ENCODE measurements at regions of chr19 and their contacts with region 1.

Region 1: GRCh38 chr19:49570138-49570856 is 10.1 kb downstream of the NOSIP start:
- DNase-seq: peak; percentile 62
- ATAC-seq: peak; percentile 78
- H3K4me3 Mint-ChIP-seq: peak overlapping the region; percentile 3; the same call in 1 of the 2 replicates
- H3K27ac Mint-ChIP-seq: peak overlapping the region; percentile 76
- H3K4me1 Mint-ChIP-seq: peaks cover 14% of the 10 kb centered on the region
- H3K27me3 Mint-ChIP-seq: no peaks in the 10 kb centered on the region
- CTCF ChIP-seq: peak; percentile 93

Region 2: DNA sequence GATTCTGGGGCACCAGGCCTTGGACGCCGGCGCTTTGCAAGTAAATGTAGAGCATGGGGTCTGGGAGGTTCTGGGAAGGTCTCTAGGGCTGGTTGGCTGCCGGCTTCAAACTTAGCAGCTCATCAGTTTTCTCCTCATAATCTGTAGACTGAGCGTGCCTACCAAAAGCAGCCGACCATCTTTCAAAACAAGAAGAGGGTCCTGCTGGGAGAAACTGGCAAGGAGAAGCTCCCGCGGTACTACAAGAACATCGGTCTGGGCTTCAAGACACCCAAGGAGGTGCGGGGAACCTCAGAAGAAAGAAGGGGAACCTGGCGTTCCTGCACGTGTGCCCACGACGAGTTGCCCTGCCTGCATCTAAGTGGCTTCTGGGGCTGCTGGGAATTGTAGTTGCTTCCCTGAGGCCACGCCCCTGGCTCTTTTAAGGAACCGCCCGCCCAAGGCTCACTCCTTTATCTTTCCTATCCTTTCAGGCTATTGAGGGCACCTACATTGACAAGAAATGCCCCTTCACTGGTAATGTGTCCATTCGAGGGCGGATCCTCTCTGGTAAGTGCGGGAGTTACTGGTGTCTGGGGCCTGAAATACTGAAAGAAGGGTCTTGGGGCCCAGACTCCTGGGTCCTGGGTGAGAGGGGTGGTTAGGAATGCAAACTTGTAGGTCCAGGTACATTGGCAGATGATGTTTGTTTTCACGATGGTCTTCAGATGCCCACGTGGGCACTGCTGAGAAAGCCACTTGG is 73.1 kb before region 1 on chr19:
- CTCF ChIA-PET with region 1: interaction called, 20 read pairs
- POLR2A ChIA-PET with region 1: no interaction called
- DNase-seq: peak; percentile 52
- ATAC-seq: no peak
- H3K4me3 Mint-ChIP-seq: peak overlapping the region; percentile 97
- H3K27ac Mint-ChIP-seq: peak overlapping the region; percentile 98
- H3K4me1 Mint-ChIP-seq: peaks cover 42% of the 10 kb centered on the region
- H3K27me3 Mint-ChIP-seq: no peaks in the 10 kb centered on the region
- CTCF ChIP-seq: no peak

Region 3: DNA sequence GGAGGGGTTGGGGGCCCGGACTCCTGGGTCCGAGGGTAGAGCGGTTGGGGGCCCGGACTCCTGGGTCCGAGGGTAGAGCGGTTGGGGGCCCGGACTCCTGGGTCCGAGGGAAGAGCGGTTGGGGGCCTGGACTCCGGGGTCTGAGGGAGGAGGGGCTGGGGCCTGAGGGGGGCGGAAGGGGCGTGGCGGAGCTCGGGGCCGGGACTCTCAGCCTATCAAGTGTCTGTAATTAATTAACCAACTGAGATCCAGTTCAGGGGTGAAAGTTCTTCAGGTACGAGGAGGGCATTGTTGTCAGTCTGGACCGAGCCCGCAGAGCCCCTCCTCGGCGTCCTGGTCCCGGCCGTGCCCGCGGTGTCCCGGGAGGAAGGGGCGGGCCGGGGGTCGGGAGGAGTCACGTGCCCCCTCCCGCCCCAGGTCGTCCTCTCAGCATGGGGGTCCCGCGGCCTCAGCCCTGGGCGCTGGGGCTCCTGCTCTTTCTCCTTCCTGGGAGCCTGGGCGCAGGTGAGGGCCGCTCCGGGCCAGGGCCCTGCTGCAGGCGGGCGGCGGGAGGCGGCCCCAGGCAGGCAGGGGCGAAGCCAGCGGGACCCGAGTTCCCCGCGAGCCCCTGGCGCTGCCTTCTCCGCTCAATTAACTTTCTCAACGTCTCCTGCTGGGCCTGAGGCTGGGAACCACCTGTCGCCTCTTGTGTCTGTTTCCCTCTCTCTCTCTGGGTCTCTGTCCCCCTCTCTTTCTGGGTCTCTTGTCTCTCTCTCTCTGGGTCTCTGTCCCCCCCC is 57.1 kb before region 1 on chr19:
- CTCF ChIA-PET with region 1: interaction called, 19 read pairs
- POLR2A ChIA-PET with region 1: interaction called, 3 read pairs
- DNase-seq: peak; percentile 65
- ATAC-seq: peak; percentile 74
- H3K4me3 Mint-ChIP-seq: peak overlapping the region; percentile 79
- H3K27ac Mint-ChIP-seq: 0 out of 2 replicates have a peak overlapping the region, but pooled peaks have one; percentile 74
- H3K4me1 Mint-ChIP-seq: peaks cover 28% of the 10 kb centered on the region
- H3K27me3 Mint-ChIP-seq: no peaks in the 10 kb centered on the region
- CTCF ChIP-seq: no peak

Region 4: DNA sequence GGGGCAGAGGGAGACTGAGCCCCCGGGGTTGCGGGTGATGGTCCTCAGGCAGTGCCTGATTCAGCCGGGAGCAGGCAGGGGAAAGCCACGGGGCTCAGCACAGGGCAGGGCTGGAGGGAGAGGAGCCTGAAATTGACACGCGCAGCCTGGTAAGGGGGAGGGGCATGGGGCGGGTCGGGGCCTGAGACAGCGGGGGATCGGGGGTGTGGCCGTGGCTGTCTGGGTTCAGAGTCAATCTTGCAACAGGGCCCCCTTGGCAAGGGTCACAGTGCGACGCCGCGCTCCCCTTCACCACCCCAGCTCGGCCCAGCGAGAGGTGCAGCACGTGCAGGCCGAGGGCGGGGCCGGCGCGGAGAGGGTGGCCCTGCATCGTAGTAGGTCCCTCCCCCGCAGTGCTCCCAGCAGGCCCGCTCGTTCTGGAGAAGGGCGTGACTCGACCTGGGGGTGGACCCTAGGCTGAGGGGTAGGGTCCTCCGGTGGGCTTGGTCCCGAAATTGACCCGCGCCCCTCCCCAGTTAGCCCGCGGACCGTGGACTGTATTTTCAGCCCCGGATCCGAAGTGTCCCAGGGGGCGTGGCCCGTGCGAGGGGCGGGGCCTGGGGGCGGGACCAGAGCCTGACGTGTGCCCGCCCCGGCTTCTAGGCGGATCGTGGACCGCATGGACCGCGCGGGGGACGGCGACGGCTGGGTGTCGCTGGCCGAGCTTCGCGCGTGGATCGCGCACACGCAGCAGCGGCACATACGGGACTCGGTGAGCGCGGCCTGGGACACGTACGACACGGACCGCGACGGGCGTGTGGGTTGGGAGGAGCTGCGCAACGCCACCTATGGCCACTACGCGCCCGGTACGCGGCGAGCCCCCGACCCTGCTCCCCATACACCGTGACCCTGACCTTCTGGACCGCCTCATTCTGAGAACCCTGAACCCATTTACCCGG is 36.5 kb before region 1 on chr19:
- CTCF ChIA-PET with region 1: interaction called, 34 read pairs
- POLR2A ChIA-PET with region 1: no interaction called
- DNase-seq: peak; percentile 82
- ATAC-seq: peak; percentile 75
- H3K4me3 Mint-ChIP-seq: peak overlapping the region; percentile 71
- H3K27ac Mint-ChIP-seq: no peak overlapping the region
- H3K4me1 Mint-ChIP-seq: peaks cover 17% of the 10 kb centered on the region
- H3K27me3 Mint-ChIP-seq: peaks cover 22% of the 10 kb centered on the region
- CTCF ChIP-seq: no peak

Region 5: GRCh38 chr19:49555600-49556411 is 14.5 kb before region 1 on chr19:
- CTCF ChIA-PET with region 1: interaction called, 95 read pairs
- POLR2A ChIA-PET with region 1: interaction called, 5 read pairs
- DNase-seq: peak; percentile 95
- ATAC-seq: peak; percentile 79
- H3K4me3 Mint-ChIP-seq: peak overlapping the region; percentile 70
- H3K27ac Mint-ChIP-seq: peak overlapping the region; percentile 89
- H3K4me1 Mint-ChIP-seq: peaks cover 21% of the 10 kb centered on the region
- H3K27me3 Mint-ChIP-seq: no peaks in the 10 kb centered on the region
- CTCF ChIP-seq: no peak

Region 6: GRCh38 chr19:49590071-49590970 is 20.0 kb after region 1 on chr19:
- CTCF ChIA-PET with region 1: interaction called, 21 read pairs
- POLR2A ChIA-PET with region 1: interaction called, 4 read pairs
- DNase-seq: peak; percentile 99
- ATAC-seq: peak; percentile 84
- H3K4me3 Mint-ChIP-seq: peak overlapping the region; percentile 95
- H3K27ac Mint-ChIP-seq: peak overlapping the region; percentile 92
- H3K4me1 Mint-ChIP-seq: peaks cover 12% of the 10 kb centered on the region
- H3K27me3 Mint-ChIP-seq: no peaks in the 10 kb centered on the region
- CTCF ChIP-seq: no peak

Region 7: GRCh38 chr19:49602806-49603205 is 32.5 kb after region 1 on chr19:
- CTCF ChIA-PET with region 1: no interaction called
- POLR2A ChIA-PET with region 1: no interaction called
- DNase-seq: no peak
- ATAC-seq: no peak
- H3K4me3 Mint-ChIP-seq: no peak overlapping the region
- H3K27ac Mint-ChIP-seq: no peak overlapping the region
- H3K4me1 Mint-ChIP-seq: no peaks in the 10 kb centered on the region
- H3K27me3 Mint-ChIP-seq: no peaks in the 10 kb centered on the region
- CTCF ChIP-seq: no peak

Region 8: DNA sequence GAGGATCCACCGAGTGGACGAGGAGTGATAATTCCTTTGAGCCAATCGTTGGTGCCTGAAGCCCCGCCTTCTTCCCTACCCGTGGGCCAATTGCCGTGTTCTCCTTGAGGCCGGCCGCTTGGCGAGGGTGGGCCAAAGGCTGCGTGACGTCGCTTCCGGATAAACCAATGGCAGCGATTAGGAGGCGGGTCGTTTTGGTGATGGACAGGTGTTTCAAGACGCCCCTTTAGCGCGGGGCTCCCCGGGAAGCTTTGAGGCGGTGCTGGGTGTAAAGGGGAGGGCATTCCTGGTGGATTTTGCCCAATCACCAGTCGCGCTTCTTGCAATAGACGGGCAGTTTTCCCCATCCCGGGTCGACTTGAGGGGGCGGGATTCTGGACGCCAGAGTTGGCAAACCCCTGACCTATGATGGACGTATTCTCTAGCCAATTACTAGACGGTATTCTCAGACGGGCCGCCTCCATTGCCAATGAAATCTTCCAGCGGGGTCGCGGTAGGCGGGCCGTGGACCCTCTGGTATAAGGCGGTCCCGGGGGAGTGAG is 106.5 kb after region 1 on chr19:
- CTCF ChIA-PET with region 1: interaction called, 26 read pairs
- POLR2A ChIA-PET with region 1: no interaction called
- DNase-seq: peak; percentile 100
- ATAC-seq: peak; percentile 70
- H3K4me3 Mint-ChIP-seq: peak overlapping the region; percentile 88
- H3K27ac Mint-ChIP-seq: peak overlapping the region; percentile 100
- H3K4me1 Mint-ChIP-seq: peaks cover 31% of the 10 kb centered on the region
- H3K27me3 Mint-ChIP-seq: no peaks in the 10 kb centered on the region
- CTCF ChIP-seq: no peak